IMR-90 (cell line): ENCODE measurements at regions of chrX and their contacts with region 1.

Region 1: GRCh38 chrX:123764967-123765871 is 32.4 kb upstream of the THOC2 start:
- DNase-seq: peak; percentile 81
- ATAC-seq: peak; percentile 99
- H3K4me3 ChIP-seq: peak overlapping the region; percentile 65
- H3K27ac ChIP-seq: peak overlapping the region; percentile 94
- H3K4me1 ChIP-seq: peaks cover 1% of the 10 kb centered on the region; the same call in 1 of the 2 replicates
- H3K27me3 ChIP-seq: no peaks in the 10 kb centered on the region
- CTCF ChIP-seq: no peak
- POLR2A ChIP-seq: no peak
- RAD21 ChIP-seq: no peak

Region 2: GRCh38 chrX:123450221-123450620 is 315.0 kb before region 1 on chrX:
- CTCF ChIA-PET with region 1: interaction called, 3 read pairs
- POLR2A ChIA-PET with region 1: no interaction called
- dilution Hi-C with region 1: no loop called
- in situ Hi-C with region 1: no loop called
- intact Hi-C with region 1: loop called (anchors 2 kb)
- DNase-seq: peak; percentile 1
- ATAC-seq: no peak
- H3K4me3 ChIP-seq: no peak overlapping the region
- H3K27ac ChIP-seq: no peak overlapping the region
- H3K4me1 ChIP-seq: no peaks in the 10 kb centered on the region
- H3K27me3 ChIP-seq: no peaks in the 10 kb centered on the region
- CTCF ChIP-seq: peak; percentile 32
- POLR2A ChIP-seq: no peak
- RAD21 ChIP-seq: peak; percentile 28; the same call in 1 of the 2 replicates

Region 3: GRCh38 chrX:123738378-123738940 is 26.8 kb before region 1 on chrX:
- CTCF ChIA-PET with region 1: no interaction called
- POLR2A ChIA-PET with region 1: no interaction called
- dilution Hi-C with region 1: no loop called
- in situ Hi-C with region 1: no loop called
- intact Hi-C with region 1: no loop called
- DNase-seq: no peak
- ATAC-seq: no peak
- H3K4me3 ChIP-seq: no peak overlapping the region
- H3K27ac ChIP-seq: no peak overlapping the region
- H3K4me1 ChIP-seq: no peaks in the 10 kb centered on the region; the same call in 1 of the 2 replicates
- H3K27me3 ChIP-seq: no peaks in the 10 kb centered on the region
- CTCF ChIP-seq: no peak
- POLR2A ChIP-seq: no peak
- RAD21 ChIP-seq: no peak